ENCODE measurements at regions of chr14 and their contacts with region 1.

Region 1: DNA sequence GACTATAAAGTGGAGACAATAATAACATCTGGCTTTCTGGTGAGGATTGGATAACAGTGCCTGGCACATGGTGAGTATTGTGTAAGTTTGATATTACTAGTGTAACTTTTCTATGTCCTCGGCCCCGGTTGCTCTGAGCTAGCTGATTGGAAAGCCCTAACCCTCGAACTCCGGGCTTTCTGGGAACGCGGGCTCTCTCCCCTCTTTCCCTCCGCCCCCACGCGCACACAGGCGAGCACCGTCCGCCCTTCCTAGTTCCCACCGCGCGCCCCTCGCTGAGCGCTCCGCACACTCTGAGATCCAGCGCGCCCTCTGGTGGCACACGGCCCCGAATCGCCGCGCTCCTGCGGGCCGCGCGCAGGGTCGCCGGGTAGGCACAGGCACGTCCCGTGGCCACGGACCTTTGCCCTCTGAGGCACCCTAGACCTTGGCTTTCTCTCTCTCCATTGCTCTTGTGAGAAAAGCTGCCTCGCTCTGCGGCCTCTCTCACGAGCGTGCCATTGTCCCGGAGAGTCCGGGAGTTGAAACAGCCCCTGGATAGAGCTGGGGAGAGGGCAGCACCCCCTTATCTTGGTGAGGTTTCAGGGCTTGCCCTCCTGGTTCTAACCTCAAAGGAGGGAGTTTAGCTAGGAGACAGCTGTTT is 23.2 kb upstream of the ESRRB start:
- DNase-seq: peak; percentile 85

Region 2: GRCh38 chr14:76050797-76051392 is 301.9 kb before region 1 on chr14:
- intact Hi-C with region 1: loop called in 1 of 2 experiments (anchors 5 kb)
- DNase-seq: no peak

Region 3: GRCh38 chr14:76375947-76376404 is 23.2 kb after region 1 on chr14 and contains the start of gene ESRRB:
- intact Hi-C with region 1: loop called in 1 of 2 experiments (anchors 1 kb)
- DNase-seq: peak; percentile 59
- total RNA-seq, gene ESRRB: 0.60 to 0.95 TPM

Measured in posterior vena cava (tissue), 2 donors.